Right lobe of liver (tissue), 6 donors: ENCODE measurements at regions of chr11 and their contacts with region 1.

Region 1: DNA sequence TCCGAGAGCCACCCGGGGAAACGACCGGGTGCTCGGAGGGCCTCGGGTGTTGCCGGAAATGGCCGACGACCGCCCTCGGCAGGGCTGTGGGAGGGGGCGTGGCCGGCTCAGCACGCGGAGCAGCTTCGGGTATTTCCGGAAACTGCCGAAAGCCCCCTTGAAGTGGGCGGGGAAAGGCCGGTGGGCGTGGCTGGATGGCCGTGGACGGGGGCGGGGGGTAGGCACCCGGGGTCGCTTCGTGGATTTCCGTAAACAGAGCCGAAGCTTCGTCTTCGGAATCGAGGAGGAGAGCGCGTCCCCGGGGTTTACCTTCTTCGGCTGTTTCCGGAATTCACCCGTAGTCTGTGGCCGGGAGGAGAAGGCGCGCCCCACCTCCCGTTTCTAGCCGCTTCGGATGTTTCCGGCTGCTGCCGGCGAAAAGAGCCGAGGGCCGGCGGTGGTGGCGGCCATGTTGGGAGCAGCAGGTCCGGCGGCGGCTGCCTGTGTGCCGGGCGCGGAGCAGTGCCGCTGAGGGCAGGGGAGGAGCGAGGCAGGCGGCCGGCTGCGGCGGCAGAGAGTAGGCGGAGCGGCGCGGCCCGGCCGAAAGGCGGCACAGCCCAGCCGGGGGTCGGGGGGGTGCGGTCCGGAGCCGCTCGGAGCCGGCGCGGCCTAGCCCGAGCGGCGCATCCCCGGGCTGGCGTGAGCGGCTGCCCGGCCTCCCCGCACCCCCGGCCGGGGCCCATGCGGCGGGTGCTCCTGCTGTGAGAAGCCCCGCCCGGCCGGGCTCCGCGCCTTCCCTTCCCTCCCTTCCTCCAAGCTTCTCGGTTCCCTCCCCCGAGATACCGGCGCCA is at the start of gene MARK2:
- DNase-seq: peak; percentile 98 to 99 (median 98)
- ATAC-seq: peak; percentile 89 to 92 (median 90)
- H3K4me3 ChIP-seq: peak within 1 kb of the TSS; percentile 69 to 96 (median 78)
- H3K27ac ChIP-seq: peak within 1 kb of the TSS; percentile 75 to 89 (median 82)
- H3K4me1 ChIP-seq: peaks cover 0 to 40% (median 5%) of the 10 kb centered on the region in 4 donors
- H3K27me3 ChIP-seq: no peaks in the 10 kb centered on the region
- CTCF ChIP-seq: no peak
- POLR2A ChIP-seq: peak; percentile 49
- total RNA-seq, gene MARK2: 10.6 to 14.8 (median 12.2) TPM

Region 2: GRCh38 chr11:63769044-63769713 is 69.7 kb before region 1 on chr11:
- intact Hi-C with region 1: no loop called
- DNase-seq: peak; percentile 47 to 59 (median 56)
- ATAC-seq: peak; percentile 4 to 31 (median 10)
- H3K4me3 ChIP-seq: peak overlapping the region; percentile 64 to 83 (median 64)
- H3K27ac ChIP-seq: peak overlapping the region; percentile 38 to 67 (median 44)
- H3K4me1 ChIP-seq: peaks cover 0 to 24% (median 9%) of the 10 kb centered on the region in 4 donors
- H3K27me3 ChIP-seq: no peaks in the 10 kb centered on the region
- CTCF ChIP-seq: peak in 1 of 4 donors; percentile 15
- POLR2A ChIP-seq: peak; percentile 52

Region 3: DNA sequence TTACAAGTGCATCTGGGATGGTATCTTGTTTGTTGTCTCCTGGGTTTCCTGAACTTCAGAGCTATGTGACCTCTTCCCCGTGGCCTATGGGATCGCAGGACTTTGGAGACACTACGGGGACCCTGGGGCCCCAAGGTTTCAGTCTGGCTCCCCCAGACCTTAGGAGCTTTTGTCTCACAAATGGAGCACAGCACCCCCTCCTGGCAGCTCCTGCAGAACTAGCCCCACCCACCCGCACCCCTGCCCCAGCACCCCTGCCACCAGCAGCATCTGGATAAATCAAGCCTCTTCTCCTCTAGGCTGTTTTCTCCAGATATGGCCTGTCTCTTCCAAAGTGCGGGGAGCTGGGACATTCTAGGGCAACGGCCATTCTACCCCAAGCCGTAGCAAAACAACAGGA is 67.7 kb after region 1 on chr11:
- intact Hi-C with region 1: loop called in 1 of 2 experiments (anchors 5 kb)
- DNase-seq: no peak
- ATAC-seq: peak in 2 of 4 donors; percentile 19 to 30
- H3K4me3 ChIP-seq: no peak overlapping the region
- H3K27ac ChIP-seq: no peak overlapping the region
- H3K4me1 ChIP-seq: no peaks in the 10 kb centered on the region
- H3K27me3 ChIP-seq: no peaks in the 10 kb centered on the region
- CTCF ChIP-seq: peak in 3 of 4 donors; percentile 20 to 36 (median 35)
- POLR2A ChIP-seq: no peak

Region 4: DNA sequence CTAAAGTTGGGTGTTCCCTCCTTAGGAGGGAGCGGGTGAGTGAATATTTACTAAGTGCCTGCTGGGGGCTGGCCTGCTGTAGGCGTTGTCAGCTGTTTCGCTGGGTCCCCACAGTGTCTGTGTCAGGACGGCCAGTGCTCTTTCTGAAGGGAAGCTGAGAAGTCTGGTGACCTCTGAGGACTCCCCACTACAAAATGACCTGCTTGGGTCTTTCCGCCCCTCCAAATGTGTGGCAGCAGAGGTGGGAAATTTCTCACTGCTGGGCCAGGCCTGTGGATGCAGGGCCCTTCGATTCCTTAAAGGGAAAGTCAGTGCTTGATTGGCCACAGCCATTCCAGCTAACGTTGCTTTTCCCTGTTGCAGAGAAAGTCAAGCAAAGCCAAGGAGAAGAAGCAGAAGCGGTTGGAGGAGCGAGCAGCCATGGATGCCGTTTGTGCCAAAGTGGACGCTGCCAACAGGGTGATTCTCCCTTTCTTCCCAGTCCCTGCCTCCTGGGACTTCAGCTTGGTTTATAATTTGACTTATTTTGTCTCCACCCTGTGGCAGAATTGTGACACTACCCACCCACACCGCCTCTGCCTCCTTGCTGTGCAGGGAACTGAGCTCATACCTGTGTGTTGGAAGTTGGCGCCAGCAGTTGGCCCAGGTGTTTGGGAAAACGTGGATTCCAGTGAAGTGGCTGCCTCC is 106.7 kb after region 1 on chr11:
- intact Hi-C with region 1: loop called (anchors 5 to 10 kb)
- DNase-seq: peak; percentile 64 to 79 (median 69)
- ATAC-seq: peak; percentile 93 to 98 (median 96)
- H3K4me3 ChIP-seq: no peak overlapping the region
- H3K27ac ChIP-seq: no peak overlapping the region
- H3K4me1 ChIP-seq: peaks cover 0 to 10% (median 5%) of the 10 kb centered on the region in 4 donors
- H3K27me3 ChIP-seq: no peaks in the 10 kb centered on the region
- CTCF ChIP-seq: peak; percentile 71 to 78 (median 78)
- POLR2A ChIP-seq: no peak